Activated CD8-positive, alpha-beta T cell treated with anti-CD3 and anti-CD28 coated beads, Interleukin-2, amount 10 ng/mL, durations not matched to agents 7 days and 5 days (primary cell): ENCODE measurements at regions of chr1 and their contacts with region 1.

Region 1: GRCh38 chr1:117128323-117129079 is 7.0 kb upstream of the TRIM45 start:
- DNase-seq: no peak
- ATAC-seq: no peak
- H3K4me3 Mint-ChIP-seq: no peak overlapping the region
- H3K27ac Mint-ChIP-seq: no peak overlapping the region
- H3K4me1 Mint-ChIP-seq: no peaks in the 10 kb centered on the region
- H3K27me3 Mint-ChIP-seq: peaks cover 19% of the 10 kb centered on the region

Region 2: DNA sequence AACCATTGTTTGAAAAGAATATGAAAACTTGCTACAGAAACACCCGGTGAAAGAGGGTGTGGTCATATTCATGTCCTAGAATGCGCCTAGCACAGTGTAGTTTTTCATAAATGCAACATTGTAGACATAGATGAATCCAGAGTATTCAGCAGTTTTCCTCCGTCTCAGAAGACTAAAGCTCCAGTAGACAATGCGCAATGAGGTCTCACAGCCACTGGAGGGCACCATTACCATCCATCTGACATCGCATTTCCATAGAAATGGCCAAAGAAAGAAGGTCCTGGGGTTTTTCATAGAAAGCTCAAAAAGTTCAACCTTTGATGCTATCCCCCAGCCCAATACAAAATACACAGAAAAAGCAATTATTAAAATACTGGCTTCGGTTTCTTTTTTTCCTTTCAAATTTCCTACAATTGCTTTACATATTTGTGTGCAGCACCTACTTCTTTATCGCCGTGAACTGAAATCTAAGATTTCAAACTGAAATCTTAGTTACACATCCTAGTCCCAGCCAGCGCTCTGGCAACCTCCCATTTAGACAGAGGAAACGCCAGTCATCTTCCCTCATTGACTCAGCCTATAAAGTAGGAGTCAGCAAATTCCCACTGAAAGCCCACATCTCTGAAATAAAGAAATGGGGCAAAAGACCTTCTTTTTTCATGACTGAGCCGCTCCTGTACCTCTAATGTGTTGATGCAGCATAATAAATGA is 553.8 kb before region 1 on chr1:
- CTCF ChIA-PET with region 1: interaction called, 17 read pairs
- POLR2A ChIA-PET with region 1: no interaction called
- DNase-seq: peak; percentile 75
- ATAC-seq: no peak
- H3K4me3 Mint-ChIP-seq: no peak overlapping the region
- H3K27ac Mint-ChIP-seq: no peak overlapping the region
- H3K4me1 Mint-ChIP-seq: peaks cover 31% of the 10 kb centered on the region
- H3K27me3 Mint-ChIP-seq: peaks cover 5% of the 10 kb centered on the region

Region 3: DNA sequence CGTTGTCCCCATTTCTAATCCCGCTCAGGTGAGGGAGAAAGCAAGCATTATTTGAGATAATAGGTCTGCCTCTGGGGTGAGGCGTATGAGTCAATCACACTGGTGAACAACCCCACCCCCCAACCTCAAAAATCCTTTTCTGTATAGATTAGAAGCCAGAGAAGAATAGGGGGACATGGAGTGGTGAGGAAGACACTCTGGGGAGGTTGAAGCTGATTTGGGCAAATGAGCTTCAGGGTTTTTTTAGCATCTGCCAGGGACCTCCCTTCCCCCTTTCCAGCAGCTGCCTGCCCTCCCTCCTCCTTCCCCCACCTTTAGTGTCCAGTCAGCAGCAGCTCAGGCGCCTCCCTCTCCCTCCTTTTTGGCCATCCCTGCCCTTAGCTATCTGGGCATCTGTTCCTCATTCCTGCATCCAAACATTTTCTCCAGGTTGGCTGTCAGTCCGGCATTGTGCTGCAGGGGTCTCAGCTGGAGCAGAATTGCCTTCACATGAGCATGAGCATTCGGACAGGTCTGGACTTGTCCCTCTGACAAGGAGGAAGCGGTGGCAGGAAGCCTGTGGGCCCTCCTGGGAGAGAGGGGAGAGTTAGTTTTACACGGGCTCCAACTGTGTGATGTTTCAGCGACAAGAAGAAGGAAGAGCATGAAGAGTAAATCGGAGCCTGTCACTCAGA is 249.6 kb before region 1 on chr1:
- CTCF ChIA-PET with region 1: no interaction called
- POLR2A ChIA-PET with region 1: no interaction called
- DNase-seq: peak; percentile 37
- ATAC-seq: peak; percentile 40
- H3K4me3 Mint-ChIP-seq: no peak overlapping the region
- H3K27ac Mint-ChIP-seq: no peak overlapping the region
- H3K4me1 Mint-ChIP-seq: peaks cover 19% of the 10 kb centered on the region
- H3K27me3 Mint-ChIP-seq: no peaks in the 10 kb centered on the region

Region 4: DNA sequence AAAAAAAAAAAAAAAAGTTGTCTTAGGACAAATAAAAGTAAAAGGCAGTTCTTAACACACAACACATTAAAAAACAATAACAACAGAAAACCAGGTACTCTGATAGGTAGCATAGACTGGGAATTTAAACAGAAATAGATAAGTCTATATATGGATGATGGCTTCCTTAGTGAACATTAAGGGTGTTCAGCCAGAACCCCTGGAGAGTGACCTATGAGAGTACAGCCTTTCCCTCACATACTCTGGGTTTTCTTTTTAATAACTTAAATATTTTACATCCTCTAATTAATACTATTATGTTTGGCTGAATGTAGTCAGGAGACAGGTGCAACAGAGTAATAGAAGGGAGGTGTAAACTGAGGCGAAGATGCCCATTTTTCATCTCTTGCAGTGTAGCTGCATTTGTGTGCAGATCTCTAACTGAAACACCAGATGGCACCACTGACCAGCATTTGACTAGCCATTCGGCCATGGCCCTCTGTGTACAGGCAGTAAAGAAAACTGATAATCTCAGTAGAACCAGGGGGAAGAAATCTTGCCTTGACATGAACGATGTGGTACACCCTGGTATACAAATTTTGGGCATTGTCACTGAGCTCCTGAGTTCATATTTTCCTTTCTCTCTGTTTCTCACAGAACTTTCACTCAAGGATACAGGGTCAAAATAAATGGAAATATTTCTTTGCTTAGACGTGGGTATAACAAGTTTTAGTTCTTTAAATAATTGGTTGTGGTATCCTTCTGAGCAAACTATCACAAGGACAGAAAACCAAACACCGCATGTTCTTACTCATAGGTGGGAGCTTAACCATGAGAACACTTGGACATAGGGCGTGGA is 60.7 kb before region 1 on chr1:
- CTCF ChIA-PET with region 1: interaction called, 46 read pairs
- POLR2A ChIA-PET with region 1: no interaction called
- DNase-seq: peak; percentile 58
- ATAC-seq: peak; percentile 80
- H3K4me3 Mint-ChIP-seq: no peak overlapping the region
- H3K27ac Mint-ChIP-seq: no peak overlapping the region
- H3K4me1 Mint-ChIP-seq: peaks cover 39% of the 10 kb centered on the region
- H3K27me3 Mint-ChIP-seq: no peaks in the 10 kb centered on the region

Region 5: DNA sequence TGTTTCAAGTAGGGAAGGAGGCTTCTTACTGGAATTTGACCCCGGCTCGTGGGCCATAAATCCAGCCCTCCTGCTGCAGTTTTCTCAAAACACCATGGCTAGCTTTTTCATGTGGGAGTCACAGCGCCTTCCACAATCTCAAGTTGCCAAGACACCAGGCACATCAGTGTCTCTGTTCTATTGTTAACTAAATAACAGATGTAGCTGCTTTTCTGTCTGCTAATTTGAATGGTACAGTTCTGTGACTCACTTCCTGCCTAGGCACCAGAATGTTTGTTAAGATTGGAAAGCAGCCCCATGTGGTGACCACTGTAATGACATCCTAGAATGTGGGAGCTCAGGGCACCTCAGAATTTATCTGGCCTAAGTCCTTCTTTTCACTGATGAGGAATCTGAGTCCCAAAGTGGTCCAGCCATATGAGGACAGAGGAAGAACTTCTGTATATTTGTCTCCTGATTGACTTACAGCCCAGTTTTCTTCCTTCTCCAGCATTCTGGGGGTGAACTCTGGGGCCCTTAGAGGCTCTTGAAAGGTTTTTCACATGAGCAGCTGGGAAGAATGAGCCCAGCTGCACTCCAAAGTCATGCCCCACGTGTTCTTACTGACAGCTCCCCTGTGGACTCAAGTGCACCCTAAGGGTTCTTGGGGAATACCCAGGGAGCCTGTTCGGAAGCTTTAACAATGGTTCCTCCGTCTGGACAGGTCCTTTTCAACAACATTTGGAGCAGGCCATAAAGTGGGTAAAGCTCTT is 34.5 kb before region 1 on chr1:
- CTCF ChIA-PET with region 1: interaction called, 28 read pairs
- POLR2A ChIA-PET with region 1: no interaction called
- DNase-seq: peak; percentile 65
- ATAC-seq: peak; percentile 92
- H3K4me3 Mint-ChIP-seq: no peak overlapping the region
- H3K27ac Mint-ChIP-seq: peak overlapping the region; percentile 50
- H3K4me1 Mint-ChIP-seq: peaks cover 16% of the 10 kb centered on the region
- H3K27me3 Mint-ChIP-seq: no peaks in the 10 kb centered on the region

Region 6: DNA sequence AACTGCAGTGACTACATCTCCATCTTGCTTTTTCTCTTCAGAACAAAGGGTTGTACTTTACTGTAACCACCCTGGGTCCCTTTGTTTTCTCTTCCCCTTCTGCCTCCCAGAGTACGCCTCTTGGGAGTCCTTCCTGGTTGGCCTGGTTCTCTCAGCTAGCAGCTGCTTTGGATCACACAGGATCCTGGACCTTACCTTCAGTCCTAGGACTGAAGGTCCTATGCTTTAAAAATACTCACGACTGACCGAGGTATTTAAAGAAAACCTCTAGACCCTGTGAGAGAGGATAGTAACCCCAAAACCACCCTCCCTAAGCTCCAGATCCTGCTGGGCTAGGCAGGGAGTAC is 11.7 kb before region 1 on chr1:
- CTCF ChIA-PET with region 1: interaction called, 19 read pairs
- POLR2A ChIA-PET with region 1: no interaction called
- DNase-seq: no peak
- ATAC-seq: no peak
- H3K4me3 Mint-ChIP-seq: no peak overlapping the region
- H3K27ac Mint-ChIP-seq: no peak overlapping the region
- H3K4me1 Mint-ChIP-seq: peaks cover 2% of the 10 kb centered on the region
- H3K27me3 Mint-ChIP-seq: peaks cover 5% of the 10 kb centered on the region

Region 7: GRCh38 chr1:117198097-117198496 is 69.6 kb after region 1 on chr1:
- CTCF ChIA-PET with region 1: no interaction called
- POLR2A ChIA-PET with region 1: no interaction called
- DNase-seq: no peak
- ATAC-seq: no peak
- H3K4me3 Mint-ChIP-seq: no peak overlapping the region
- H3K27ac Mint-ChIP-seq: no peak overlapping the region
- H3K4me1 Mint-ChIP-seq: no peaks in the 10 kb centered on the region
- H3K27me3 Mint-ChIP-seq: peaks cover 13% of the 10 kb centered on the region